ENCODE measurements at regions of chr2 and their contacts with region 1.

Region 1: DNA sequence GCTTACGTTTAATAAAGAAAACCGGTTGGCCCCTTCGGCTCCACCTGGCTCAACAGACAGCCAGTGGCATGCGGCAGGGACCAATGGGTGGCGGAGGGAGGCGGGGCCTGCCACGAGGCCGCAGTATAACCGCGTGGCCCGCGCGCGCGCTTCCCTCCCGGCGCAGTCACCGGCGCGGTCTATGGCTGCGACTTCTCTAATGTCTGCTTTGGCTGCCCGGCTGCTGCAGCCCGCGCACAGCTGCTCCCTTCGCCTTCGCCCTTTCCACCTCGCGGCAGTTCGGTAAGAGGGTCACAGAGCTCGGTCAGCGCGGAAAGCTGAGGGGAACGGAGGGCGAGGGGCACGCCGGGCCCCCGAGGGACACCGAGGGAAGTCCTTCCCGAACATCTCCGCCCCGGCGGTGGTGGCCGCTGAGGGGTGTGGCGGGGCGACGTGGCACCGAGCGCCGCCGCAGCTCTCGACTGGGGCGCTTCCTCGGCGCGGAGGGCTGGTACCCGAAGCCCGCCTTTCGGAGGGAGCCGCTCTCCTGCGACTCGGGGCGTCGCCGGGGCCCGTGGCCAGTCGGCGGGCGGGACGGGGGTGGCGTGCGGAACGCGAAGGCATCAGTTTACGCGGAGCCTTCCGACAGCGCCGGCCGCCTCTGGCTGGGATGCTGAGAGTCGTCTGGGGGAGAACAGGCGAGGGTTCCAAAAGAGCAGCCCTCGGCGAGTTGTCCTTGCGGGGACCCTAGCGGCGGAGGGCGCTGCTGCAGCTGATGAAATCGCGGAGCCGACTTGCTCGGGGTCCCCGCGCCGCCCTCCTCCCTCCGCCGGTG is at the start of gene MTHFD2:
- DNase-seq: peak; percentile 74 to 93 (median 88)
- ATAC-seq: peak; percentile 82
- H3K4me3 ChIP-seq: peak within 1 kb of the TSS; percentile 78 to 86
- H3K4me3 Mint-ChIP-seq: peak within 1 kb of the TSS; percentile 98
- H3K27ac ChIP-seq: peak within 1 kb of the TSS; percentile 87 to 89
- H3K27ac Mint-ChIP-seq: peak within 1 kb of the TSS; percentile 99
- H3K4me1 ChIP-seq: peaks cover 17% of the 10 kb centered on the region
- H3K4me1 Mint-ChIP-seq: peaks cover 25% of the 10 kb centered on the region
- H3K27me3 ChIP-seq: no peaks in the 10 kb centered on the region
- H3K27me3 Mint-ChIP-seq: no peaks in the 10 kb centered on the region
- CTCF ChIP-seq: peak; percentile 77
- total RNA-seq, gene MTHFD2: 25.8 to 26.7 TPM

Region 2: GRCh38 chr2:74119912-74120825 is 78.5 kb before region 1 on chr2:
- CTCF ChIA-PET with region 1: no interaction called
- POLR2A ChIA-PET with region 1: interaction called, 4 read pairs
- intact Hi-C with region 1: loop called in 1 of 2 experiments (anchors 1 kb)
- DNase-seq: peak; percentile 76 to 92 (median 83)
- ATAC-seq: peak; percentile 97
- H3K4me3 ChIP-seq: peak overlapping the region; percentile 94 to 96
- H3K4me3 Mint-ChIP-seq: peak overlapping the region; percentile 84
- H3K27ac ChIP-seq: peak overlapping the region; percentile 82 to 95
- H3K27ac Mint-ChIP-seq: peak overlapping the region; percentile 92
- H3K4me1 ChIP-seq: peaks cover 8% of the 10 kb centered on the region
- H3K4me1 Mint-ChIP-seq: peaks cover 7% of the 10 kb centered on the region
- H3K27me3 ChIP-seq: peaks cover 0 to 4% of the 10 kb centered on the region in 2 experiments
- H3K27me3 Mint-ChIP-seq: peaks cover 4% of the 10 kb centered on the region
- CTCF ChIP-seq: peak; percentile 47

Region 3: GRCh38 chr2:74130163-74130995 is 68.3 kb before region 1 on chr2:
- CTCF ChIA-PET with region 1: no interaction called
- POLR2A ChIA-PET with region 1: no interaction called
- intact Hi-C with region 1: no loop called
- DNase-seq: no peak
- ATAC-seq: no peak
- H3K4me3 ChIP-seq: no peak overlapping the region
- H3K4me3 Mint-ChIP-seq: no peak overlapping the region
- H3K27ac ChIP-seq: no peak overlapping the region
- H3K27ac Mint-ChIP-seq: no peak overlapping the region
- H3K4me1 ChIP-seq: no peaks in the 10 kb centered on the region
- H3K4me1 Mint-ChIP-seq: no peaks in the 10 kb centered on the region
- H3K27me3 ChIP-seq: peaks cover 2 to 4% of the 10 kb centered on the region in 2 experiments
- H3K27me3 Mint-ChIP-seq: peaks cover 17% of the 10 kb centered on the region
- CTCF ChIP-seq: no peak

Measured in CD8-positive, alpha-beta T cell (primary cell).